ENCODE measurements at regions of chr7 and their contacts with region 1.

Region 1: GRCh38 chr7:44082541-44083207 is 344 bp upstream of the POLM start:
- DNase-seq: peak; percentile 99
- H3K4me3 Mint-ChIP-seq: peak overlapping the region; percentile 75
- H3K27ac Mint-ChIP-seq: peak overlapping the region; percentile 59
- H3K4me1 Mint-ChIP-seq: peaks cover 31% of the 10 kb centered on the region
- H3K27me3 Mint-ChIP-seq: no peaks in the 10 kb centered on the region

Region 2: DNA sequence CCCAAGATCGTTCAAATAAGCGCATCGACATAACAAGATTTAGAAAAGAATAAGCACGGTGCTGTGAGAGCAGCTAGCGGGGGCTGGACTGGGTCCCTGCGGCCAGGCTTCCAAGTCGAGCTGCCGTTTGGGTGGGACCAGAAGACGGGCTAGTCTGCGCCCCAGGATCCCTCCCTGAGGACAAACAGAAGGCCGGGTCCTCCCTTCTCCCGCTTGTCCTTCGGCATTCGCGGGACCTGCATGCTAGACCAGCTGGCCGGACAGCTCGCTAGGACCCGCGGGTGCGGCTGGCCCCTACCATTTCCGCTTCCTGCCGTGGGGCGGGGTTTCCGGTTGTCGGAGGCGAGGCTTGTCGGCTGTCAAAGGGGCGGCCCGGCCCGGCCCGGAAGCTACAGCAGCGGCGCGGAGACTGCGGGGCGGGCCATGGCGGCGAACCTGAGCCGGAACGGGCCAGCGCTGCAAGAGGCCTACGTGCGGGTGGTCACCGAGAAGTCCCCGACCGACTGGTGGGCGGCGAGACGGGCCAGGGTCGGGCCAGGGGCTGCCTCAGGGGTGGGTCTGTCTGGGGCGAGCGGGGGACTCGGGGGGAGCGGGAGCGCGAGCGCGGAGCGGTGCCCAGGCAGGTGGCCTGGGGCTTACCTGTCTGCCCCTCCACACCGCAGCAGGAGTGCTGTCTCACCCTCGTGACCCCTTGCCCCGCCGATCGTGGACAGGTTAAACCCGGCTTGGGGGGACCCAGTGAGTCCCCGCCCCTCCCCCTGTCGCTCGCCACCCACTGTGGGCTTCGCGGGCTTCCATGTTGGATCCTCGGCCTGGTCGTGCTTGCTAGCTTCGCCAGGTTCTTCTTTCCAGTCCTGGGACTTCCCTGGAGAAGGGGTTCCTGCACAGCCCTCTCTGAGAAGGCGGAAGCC is 38.1 kb before region 1 on chr7 and contains the start of gene DBNL:
- CTCF ChIA-PET with region 1: interaction called, 5 read pairs
- intact Hi-C with region 1: loop called (anchors 1 kb)
- DNase-seq: peak; percentile 95
- H3K4me3 Mint-ChIP-seq: peak within 1 kb of the TSS; percentile 79
- H3K27ac Mint-ChIP-seq: peak within 1 kb of the TSS; percentile 89
- H3K4me1 Mint-ChIP-seq: peaks cover 48% of the 10 kb centered on the region
- H3K27me3 Mint-ChIP-seq: no peaks in the 10 kb centered on the region
- total RNA-seq, gene DBNL: 82.3 TPM

Region 3: GRCh38 chr7:44123190-44124003 is 40.7 kb after region 1 on chr7 and contains the start of gene POLD2:
- CTCF ChIA-PET with region 1: interaction called, 7 read pairs
- intact Hi-C with region 1: loop called (anchors 1 kb)
- DNase-seq: peak; percentile 98
- H3K4me3 Mint-ChIP-seq: peak within 1 kb of the TSS; percentile 88
- H3K27ac Mint-ChIP-seq: peak within 1 kb of the TSS; percentile 74
- H3K4me1 Mint-ChIP-seq: peaks cover 43% of the 10 kb centered on the region
- H3K27me3 Mint-ChIP-seq: no peaks in the 10 kb centered on the region
- total RNA-seq, gene POLD2: 261 to 270 TPM

Region 4: GRCh38 chr7:44200647-44201461 is 118.2 kb after region 1 on chr7 and contains the start of gene YKT6:
- CTCF ChIA-PET with region 1: interaction called, 3 read pairs
- intact Hi-C with region 1: loop called (anchors 2 kb)
- DNase-seq: peak; percentile 98
- H3K4me3 Mint-ChIP-seq: peak within 1 kb of the TSS; percentile 82
- H3K27ac Mint-ChIP-seq: peak within 1 kb of the TSS; percentile 56
- H3K4me1 Mint-ChIP-seq: peaks cover 28% of the 10 kb centered on the region
- H3K27me3 Mint-ChIP-seq: no peaks in the 10 kb centered on the region
- total RNA-seq, gene YKT6: 53.5 to 57.3 TPM

Region 5: DNA sequence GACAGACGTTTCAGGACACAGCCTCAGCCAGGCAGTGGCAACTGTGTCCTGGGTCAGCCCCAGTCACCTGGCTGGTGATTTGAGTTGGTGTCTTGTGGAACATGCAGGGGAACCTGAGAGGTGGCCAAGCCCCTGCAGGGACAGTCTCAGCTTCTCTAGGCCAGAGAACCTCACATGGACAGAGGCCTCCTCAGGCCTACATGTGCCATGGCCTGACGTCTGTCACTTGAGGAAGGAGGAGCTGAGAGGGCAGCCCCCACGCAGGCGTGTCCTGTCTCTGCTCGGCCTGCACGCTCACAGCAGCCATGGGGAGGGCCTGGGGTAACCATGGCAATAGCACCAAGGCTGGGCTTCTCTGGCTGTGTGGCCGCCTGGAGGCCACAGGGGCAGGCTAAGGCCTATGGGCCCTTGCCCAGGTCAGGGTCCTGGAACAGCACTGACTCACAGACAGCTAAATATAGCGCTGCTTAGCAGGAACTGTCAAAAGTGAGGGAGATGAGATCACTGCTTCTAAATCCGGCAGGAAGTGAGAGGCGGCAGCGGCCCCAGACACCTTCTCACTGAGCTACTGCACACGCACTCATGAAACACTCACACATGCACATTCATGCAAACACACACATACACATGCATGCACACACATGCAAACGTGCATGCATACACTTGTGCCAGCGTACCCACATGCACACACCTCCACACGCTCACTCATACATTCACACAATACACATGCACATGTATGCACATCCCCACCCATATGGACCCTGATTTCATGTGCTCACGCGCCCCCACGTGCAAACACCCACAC is 175.1 kb after region 1 on chr7:
- CTCF ChIA-PET with region 1: no interaction called
- intact Hi-C with region 1: loop called (anchors 2 kb)
- DNase-seq: peak; percentile 90
- H3K4me3 Mint-ChIP-seq: peak overlapping the region; percentile 17
- H3K27ac Mint-ChIP-seq: peak overlapping the region; percentile 94
- H3K4me1 Mint-ChIP-seq: peaks cover 29% of the 10 kb centered on the region
- H3K27me3 Mint-ChIP-seq: no peaks in the 10 kb centered on the region

Region 6: DNA sequence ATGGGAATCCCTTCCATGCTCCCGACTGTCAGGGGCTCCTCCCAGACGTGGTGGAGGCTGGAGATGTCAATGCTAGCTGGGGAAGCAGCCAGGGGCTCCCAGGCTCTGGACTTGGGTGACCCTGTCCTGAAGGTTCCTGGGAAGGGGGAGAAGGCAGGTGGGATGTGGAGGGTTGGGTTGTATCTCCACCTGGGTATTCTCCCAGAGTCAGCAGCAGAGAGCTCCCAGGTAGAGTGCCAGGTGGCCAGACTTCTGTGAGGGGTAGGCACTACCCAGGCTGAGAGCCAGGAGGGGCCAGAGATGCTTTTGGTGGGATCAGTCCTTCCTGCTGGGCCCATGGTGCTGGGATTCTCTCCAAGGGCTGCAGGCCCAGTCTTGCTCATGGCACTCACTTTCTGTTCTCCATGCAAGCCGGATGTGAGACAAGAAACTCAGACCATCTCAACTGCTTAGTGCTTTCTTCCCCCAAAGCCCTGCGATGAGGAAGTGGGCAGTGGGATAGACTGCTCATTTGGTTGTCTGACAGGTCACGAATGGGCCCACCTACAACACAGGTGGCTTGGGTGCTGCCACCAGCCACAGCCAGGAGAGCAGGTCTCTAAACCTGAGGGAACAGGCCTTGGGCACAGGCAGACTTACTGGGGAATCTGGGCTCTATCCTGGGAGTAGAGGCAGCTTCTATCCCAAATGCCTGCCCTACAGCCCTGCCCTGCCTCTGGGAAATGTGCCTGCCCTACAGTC is 295.2 kb after region 1 on chr7:
- CTCF ChIA-PET with region 1: no interaction called
- intact Hi-C with region 1: no loop called
- DNase-seq: no peak
- H3K4me3 Mint-ChIP-seq: no peak overlapping the region
- H3K27ac Mint-ChIP-seq: no peak overlapping the region
- H3K4me1 Mint-ChIP-seq: no peaks in the 10 kb centered on the region
- H3K27me3 Mint-ChIP-seq: no peaks in the 10 kb centered on the region

Region 7: DNA sequence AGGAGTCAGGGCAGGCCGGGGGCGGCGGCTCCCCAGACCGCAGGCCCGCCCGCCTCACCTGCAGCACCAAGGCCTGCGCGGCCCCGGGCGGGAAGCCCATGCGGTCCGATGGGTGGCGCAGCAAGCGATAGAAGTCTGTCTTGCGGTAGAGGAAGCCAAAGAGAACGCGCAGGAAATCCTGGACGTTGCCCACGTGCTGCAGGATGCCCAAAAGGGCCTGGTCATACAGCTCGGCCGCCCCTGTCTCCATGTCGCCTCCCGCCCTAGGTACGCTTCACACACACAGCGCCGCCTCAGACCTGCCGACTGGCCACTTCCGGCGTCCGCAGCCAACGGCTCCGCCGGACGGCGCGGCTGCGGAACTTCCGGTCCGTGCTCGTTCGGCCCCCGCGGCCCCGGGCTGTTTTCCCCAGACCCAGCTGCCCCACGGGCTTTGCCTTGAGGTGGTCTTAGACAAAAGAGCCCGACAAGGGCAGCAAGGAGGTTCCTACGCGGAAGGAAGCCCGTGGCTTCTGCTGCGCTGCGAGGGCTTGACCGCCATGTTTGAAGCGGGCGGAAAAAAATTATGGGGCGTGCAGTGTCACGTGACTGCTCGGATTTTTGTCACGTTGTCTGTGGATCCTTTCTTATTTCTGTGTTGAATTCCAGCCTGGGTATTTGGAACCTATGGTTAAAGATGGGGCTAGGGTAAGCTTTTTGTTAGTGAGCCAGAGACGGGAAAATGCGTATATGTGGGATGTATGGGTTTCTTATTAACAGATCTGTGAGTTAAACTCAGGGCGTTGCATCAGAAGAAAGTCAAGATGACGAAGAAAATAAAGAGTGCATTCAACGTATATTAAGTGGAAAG is 407.9 kb after region 1 on chr7 and contains the start of gene NUDCD3:
- CTCF ChIA-PET with region 1: no interaction called
- intact Hi-C with region 1: loop called (anchors 2 kb)
- DNase-seq: peak; percentile 89
- H3K4me3 Mint-ChIP-seq: peak within 1 kb of the TSS; percentile 85
- H3K27ac Mint-ChIP-seq: peak within 1 kb of the TSS; percentile 94
- H3K4me1 Mint-ChIP-seq: peaks cover 41% of the 10 kb centered on the region
- H3K27me3 Mint-ChIP-seq: no peaks in the 10 kb centered on the region
- total RNA-seq, gene NUDCD3: 81.1 to 81.8 TPM

Region 8: GRCh38 chr7:44573464-44574286 is 491.0 kb after region 1 on chr7 and contains the start of gene DDX56:
- CTCF ChIA-PET with region 1: no interaction called
- intact Hi-C with region 1: loop called (anchors 5 kb)
- DNase-seq: peak; percentile 96
- H3K4me3 Mint-ChIP-seq: peak within 1 kb of the TSS; percentile 96
- H3K27ac Mint-ChIP-seq: peak within 1 kb of the TSS; percentile 93
- H3K4me1 Mint-ChIP-seq: peaks cover 52% of the 10 kb centered on the region
- H3K27me3 Mint-ChIP-seq: no peaks in the 10 kb centered on the region
- total RNA-seq, gene DDX56: 65.8 to 74.0 TPM